Prostate gland (tissue), 2 donors: ENCODE measurements at regions of chr15 and their contacts with region 1.

Region 1: GRCh38 chr15:35289024-35289617 is 204.0 kb upstream of the NANOGP8 start:
- DNase-seq: peak; percentile 9
- H3K4me3 ChIP-seq: no peak overlapping the region
- H3K27ac ChIP-seq: no peak overlapping the region
- H3K4me1 ChIP-seq: no peaks in the 10 kb centered on the region
- H3K27me3 ChIP-seq: no peaks in the 10 kb centered on the region
- CTCF ChIP-seq: peak; percentile 9 to 74 (median 54)
- POLR2A ChIP-seq: no peak

Region 2: DNA sequence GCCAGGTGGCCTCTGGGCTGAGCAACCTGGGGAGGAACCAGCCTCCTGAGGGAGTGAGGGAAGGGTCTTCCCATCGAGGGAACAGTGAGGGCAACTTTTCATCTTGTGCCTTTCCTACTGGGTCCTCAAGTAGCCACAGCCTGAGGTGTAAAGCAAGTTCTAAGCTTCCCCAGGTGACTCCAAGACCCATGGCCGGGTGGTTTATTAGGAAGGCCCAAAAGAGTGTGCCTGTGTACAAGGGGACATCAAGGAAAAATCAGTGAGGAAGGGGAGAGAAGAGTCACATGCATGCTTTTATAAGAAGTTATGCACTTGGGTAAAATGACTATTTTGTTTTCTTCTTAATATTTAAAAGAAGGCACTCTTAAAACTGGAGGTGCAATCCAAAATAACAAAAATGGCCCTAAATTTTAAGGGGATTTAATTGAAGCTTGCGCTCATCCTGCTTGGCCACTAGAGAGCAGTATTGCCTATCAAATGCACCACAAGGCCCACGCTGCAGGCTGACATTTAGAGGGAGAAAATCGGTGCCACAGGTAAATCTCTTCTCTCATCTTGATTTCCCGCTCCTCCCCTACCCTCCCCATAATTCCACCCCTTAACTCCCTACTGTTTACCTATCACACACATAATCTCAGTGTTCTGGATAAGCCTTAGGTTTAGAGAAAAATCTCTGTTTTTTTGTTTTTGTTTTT is 210.8 kb before region 1 on chr15:
- intact Hi-C with region 1: loop called (anchors 10 kb)
- DNase-seq: peak; percentile 11
- H3K4me3 ChIP-seq: no peak overlapping the region
- H3K27ac ChIP-seq: peak overlapping the region in 1 of 2 donors; percentile 41
- H3K4me1 ChIP-seq: no peaks in the 10 kb centered on the region
- H3K27me3 ChIP-seq: no peaks in the 10 kb centered on the region
- CTCF ChIP-seq: peak in 3 of 4 experiments; percentile 59 to 72 (median 65)
- POLR2A ChIP-seq: no peak

Region 3: GRCh38 chr15:35444557-35445204 is 155.6 kb after region 1 on chr15:
- intact Hi-C with region 1: loop called (anchors 5 kb)
- DNase-seq: no peak
- H3K4me3 ChIP-seq: no peak overlapping the region
- H3K27ac ChIP-seq: no peak overlapping the region
- H3K4me1 ChIP-seq: no peaks in the 10 kb centered on the region
- H3K27me3 ChIP-seq: no peaks in the 10 kb centered on the region
- CTCF ChIP-seq: peak in 3 of 4 experiments; percentile 56 to 61 (median 57)
- POLR2A ChIP-seq: no peak

Region 4: GRCh38 chr15:35519541-35520149 is 230.5 kb after region 1 on chr15:
- intact Hi-C with region 1: loop called (anchors 10 kb)
- DNase-seq: no peak
- H3K4me3 ChIP-seq: no peak overlapping the region
- H3K27ac ChIP-seq: no peak overlapping the region
- H3K4me1 ChIP-seq: no peaks in the 10 kb centered on the region
- H3K27me3 ChIP-seq: no peaks in the 10 kb centered on the region
- CTCF ChIP-seq: peak in 3 of 4 experiments; percentile 48 to 65 (median 61)
- POLR2A ChIP-seq: no peak

Region 5: GRCh38 chr15:35697549-35698299 is 408.6 kb after region 1 on chr15:
- intact Hi-C with region 1: no loop called
- DNase-seq: no peak
- H3K4me3 ChIP-seq: no peak overlapping the region
- H3K27ac ChIP-seq: no peak overlapping the region
- H3K4me1 ChIP-seq: no peaks in the 10 kb centered on the region
- H3K27me3 ChIP-seq: no peaks in the 10 kb centered on the region
- CTCF ChIP-seq: peak in 2 of 4 experiments; percentile 13 to 20
- POLR2A ChIP-seq: no peak

Region 6: DNA sequence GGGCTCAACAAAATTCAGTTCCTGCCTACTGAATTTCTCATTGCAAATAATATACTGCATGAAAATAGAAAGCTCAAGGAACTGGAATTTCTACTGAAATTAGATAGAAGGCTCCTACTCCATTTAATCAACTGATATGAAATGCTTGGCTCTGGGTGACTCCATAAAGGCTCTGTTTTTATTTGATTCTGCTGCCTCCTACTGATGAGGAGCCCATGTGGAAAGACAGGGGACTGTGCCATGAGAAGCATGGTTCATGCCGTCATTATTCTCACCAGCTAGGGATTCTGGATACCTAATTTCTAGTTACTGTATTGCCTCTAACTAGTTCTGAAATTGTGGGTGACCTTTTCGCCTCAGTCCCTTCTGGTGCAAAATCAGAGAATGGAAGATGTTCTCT is 623.1 kb after region 1 on chr15:
- intact Hi-C with region 1: loop called (anchors 5 kb)
- DNase-seq: no peak
- H3K4me3 ChIP-seq: no peak overlapping the region
- H3K27ac ChIP-seq: no peak overlapping the region
- H3K4me1 ChIP-seq: no peaks in the 10 kb centered on the region
- H3K27me3 ChIP-seq: no peaks in the 10 kb centered on the region
- CTCF ChIP-seq: no peak
- POLR2A ChIP-seq: no peak